Tibial artery (tissue), 4 donors: ENCODE measurements at regions of chr1 and their contacts with region 1.

Region 1: DNA sequence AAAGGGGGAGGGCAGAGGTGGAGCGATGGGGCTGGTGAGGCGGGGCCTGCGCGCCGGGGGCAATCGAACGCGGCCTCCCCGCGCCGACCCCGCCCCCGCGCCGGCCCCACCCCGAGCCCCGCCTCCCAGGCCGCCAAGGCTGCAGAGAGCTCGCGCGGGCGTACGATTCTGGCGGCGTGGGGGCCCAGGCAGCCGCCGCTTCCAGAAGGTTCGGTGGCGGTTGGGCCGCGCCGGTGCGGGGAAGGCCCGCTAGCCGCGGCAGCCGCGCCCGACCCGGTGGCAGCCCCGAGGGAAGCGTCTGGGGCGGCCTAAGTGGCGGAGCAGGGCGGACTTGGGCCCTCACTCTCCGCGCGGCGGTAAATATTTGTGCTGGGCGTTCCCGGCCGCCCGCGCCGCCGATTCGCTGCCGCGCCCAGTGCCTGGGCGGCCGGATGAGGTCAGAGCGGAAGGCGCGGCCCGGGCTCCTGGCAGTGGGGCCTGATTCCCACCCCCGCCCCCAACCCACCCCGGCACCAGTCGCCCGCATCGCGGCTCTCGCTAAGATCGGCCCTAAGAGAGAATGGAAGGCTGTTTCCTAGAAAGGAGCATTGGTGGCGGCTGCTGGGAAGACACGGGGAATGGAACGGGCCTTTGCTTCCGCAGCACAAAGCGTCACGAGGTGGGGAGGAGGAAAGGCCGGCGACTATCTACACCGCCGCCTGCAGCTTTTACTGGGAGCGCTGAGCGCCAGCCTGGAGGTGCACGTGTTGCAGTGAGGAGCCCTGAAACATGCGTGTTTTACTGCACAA is at the start of gene ACOT7:
- DNase-seq: peak; percentile 83 to 92
- H3K4me3 ChIP-seq: peak within 1 kb of the TSS; percentile 58 to 73
- H3K27ac ChIP-seq: peak within 1 kb of the TSS; percentile 92 to 97
- H3K4me1 ChIP-seq: peaks cover 0 to 18% (median 12%) of the 10 kb centered on the region in 4 donors
- H3K27me3 ChIP-seq: peaks cover 0 to 2% of the 10 kb centered on the region in 2 donors
- CTCF ChIP-seq: peak in 1 of 2 experiments; percentile 21

Region 2: GRCh38 chr1:5992026-5992813 is 401.4 kb before region 1 on chr1 and contains the start of gene NPHP4:
- intact Hi-C with region 1: loop called (anchors 5 kb)
- DNase-seq: peak; percentile 99 to 100
- H3K4me3 ChIP-seq: peak within 1 kb of the TSS; percentile 61 to 82
- H3K27ac ChIP-seq: peak within 1 kb of the TSS; percentile 75 to 81
- H3K4me1 ChIP-seq: peaks cover 0 to 20% (median 19%) of the 10 kb centered on the region in 4 donors
- H3K27me3 ChIP-seq: peaks cover 0 to 15% of the 10 kb centered on the region in 2 donors
- CTCF ChIP-seq: no peak

Region 3: DNA sequence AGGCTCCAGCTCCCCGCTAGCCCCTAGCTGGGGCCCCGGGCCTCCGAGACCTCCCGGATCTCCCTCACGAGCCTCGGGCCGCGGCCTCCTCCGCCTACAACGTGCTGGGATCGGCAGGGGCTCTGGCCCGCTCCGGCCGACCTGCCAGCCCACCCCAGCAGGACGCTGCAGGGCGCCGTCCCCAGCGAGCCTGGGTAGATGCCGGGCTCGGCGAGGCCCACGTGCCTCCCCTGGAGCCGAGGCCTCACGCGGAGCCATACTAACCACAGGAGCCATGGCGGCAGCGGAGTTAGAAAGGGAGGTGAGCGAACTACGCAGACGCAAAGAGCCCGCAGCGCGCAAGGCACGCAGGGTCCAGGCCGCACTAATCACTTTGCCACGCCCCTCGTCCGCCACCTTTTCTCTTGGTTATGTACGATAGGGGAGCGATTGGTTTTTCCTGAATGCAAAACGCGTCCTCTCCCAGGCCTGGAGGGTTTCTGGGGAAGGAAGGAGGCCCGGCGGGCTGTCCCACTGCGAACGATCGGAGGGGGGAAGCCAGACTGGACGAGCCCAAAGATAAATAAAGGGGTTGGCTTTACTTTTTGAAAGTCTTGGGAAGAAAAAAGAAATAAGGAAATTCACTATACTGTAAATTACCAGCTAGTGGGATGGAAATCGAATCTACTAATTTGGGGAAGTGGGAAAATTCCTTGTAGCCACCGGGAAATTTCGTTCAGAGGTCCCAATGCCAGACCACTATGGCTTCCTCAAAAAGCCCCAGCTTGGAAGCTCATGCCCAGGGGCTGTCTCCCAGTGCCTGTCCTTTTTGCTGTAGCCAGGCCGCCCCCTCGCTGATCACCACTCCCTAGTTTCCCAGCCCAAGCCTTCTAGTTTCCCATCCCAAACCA is 194.1 kb before region 1 on chr1 and contains the start of gene RPL22:
- intact Hi-C with region 1: loop called (anchors 2 kb)
- DNase-seq: peak; percentile 99
- H3K4me3 ChIP-seq: peak within 1 kb of the TSS; percentile 92 to 97
- H3K27ac ChIP-seq: peak within 1 kb of the TSS; percentile 71 to 84
- H3K4me1 ChIP-seq: peaks cover 0 to 31% (median 21%) of the 10 kb centered on the region in 4 donors
- H3K27me3 ChIP-seq: no peaks in the 10 kb centered on the region
- CTCF ChIP-seq: no peak